ENCODE measurements at regions of chr2 and their contacts with region 1.

Region 1: GRCh38 chr2:143901185-143901842 is 618.6 kb downstream of the ZEB2 start:
- DNase-seq: peak; percentile 90
- ATAC-seq: peak; percentile 89
- H3K4me3 ChIP-seq: peak overlapping the region; percentile 59
- H3K27ac ChIP-seq: peak overlapping the region; percentile 80
- H3K4me1 ChIP-seq: peaks cover 32% of the 10 kb centered on the region
- H3K27me3 ChIP-seq: no peaks in the 10 kb centered on the region
- CTCF ChIP-seq: no peak

Region 2: GRCh38 chr2:143730155-143730952 is 171.0 kb before region 1 on chr2:
- CTCF ChIA-PET with region 1: no interaction called
- POLR2A ChIA-PET with region 1: no interaction called
- intact Hi-C with region 1: loop called (anchors 10 kb)
- DNase-seq: peak; percentile 77
- ATAC-seq: peak; percentile 96
- H3K4me3 ChIP-seq: no peak overlapping the region
- H3K27ac ChIP-seq: peak overlapping the region; percentile 18
- H3K4me1 ChIP-seq: peaks cover 31% of the 10 kb centered on the region
- H3K27me3 ChIP-seq: no peaks in the 10 kb centered on the region
- CTCF ChIP-seq: no peak

Region 3: DNA sequence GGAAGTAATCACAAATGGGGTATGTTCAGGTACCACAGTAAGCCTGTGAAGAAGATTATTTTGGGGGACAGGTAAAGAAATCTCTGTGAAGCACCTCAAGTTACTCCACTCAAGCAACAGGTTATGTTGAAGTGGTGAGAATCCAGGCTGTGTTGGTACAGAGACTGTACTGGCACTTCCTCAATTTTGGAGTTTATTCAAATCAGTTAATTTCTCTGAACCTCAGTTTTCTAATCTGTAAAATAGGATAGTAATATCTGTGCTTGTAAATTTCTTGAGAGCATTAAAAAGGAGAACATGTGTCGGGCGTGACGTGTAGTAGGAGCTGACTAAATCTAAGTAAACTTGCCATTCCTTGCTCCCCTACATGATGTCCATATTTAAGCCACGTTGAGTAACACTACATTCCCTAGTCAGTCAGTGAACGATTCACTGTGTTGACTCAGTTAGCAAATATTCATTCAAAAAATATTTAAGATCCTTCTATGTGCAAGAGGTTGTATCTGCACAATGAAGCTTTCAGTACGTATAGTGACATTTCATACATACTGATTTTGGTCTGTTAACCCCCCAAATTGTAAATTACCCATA is 114.4 kb after region 1 on chr2:
- CTCF ChIA-PET with region 1: no interaction called
- POLR2A ChIA-PET with region 1: no interaction called
- intact Hi-C with region 1: loop called (anchors 5 kb)
- DNase-seq: peak; percentile 93
- ATAC-seq: peak; percentile 91
- H3K4me3 ChIP-seq: no peak overlapping the region
- H3K27ac ChIP-seq: peak overlapping the region; percentile 62
- H3K4me1 ChIP-seq: peaks cover 25% of the 10 kb centered on the region
- H3K27me3 ChIP-seq: no peaks in the 10 kb centered on the region
- CTCF ChIP-seq: no peak